Activated CD4-positive, alpha-beta T cell treated with anti-CD3 and anti-CD28 coated beads for 36 hours (primary cell): ENCODE measurements at regions of chr3 and their contacts with region 1.

Region 1: DNA sequence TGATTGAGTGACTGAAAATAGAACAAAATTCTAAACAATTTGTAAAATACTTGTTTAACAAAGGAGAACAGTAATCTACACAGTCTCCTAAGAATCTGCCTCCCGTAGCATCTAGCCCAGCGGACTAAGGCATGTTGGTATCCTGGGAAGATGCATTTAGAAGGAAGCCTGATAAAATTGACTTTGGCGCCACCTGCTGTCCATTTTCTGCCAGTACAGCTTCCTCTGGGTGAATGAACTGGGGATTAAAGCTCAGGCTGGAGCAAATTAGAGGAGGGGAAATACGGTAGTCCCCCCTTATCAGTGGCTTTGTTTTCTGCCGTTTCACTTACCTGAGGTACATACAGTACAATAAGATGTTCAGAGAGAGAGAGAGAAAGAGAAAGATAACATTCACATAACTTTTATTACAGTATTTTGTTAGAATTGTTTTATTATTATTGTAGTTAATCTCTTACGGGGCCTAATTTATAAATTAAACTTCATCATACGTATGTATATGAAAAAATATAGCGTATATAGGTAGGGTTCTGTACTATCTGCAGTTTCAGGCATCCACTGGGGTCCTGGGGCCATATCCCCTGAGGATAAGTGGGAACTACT is 191.6 kb downstream of the GAP43 start:
- DNase-seq: peak; percentile 79
- ATAC-seq: peak; percentile 57
- H3K4me3 Mint-ChIP-seq: no peak overlapping the region
- H3K27ac Mint-ChIP-seq: no peak overlapping the region
- H3K4me1 Mint-ChIP-seq: no peaks in the 10 kb centered on the region
- H3K27me3 Mint-ChIP-seq: peaks cover 7% of the 10 kb centered on the region

Region 2: DNA sequence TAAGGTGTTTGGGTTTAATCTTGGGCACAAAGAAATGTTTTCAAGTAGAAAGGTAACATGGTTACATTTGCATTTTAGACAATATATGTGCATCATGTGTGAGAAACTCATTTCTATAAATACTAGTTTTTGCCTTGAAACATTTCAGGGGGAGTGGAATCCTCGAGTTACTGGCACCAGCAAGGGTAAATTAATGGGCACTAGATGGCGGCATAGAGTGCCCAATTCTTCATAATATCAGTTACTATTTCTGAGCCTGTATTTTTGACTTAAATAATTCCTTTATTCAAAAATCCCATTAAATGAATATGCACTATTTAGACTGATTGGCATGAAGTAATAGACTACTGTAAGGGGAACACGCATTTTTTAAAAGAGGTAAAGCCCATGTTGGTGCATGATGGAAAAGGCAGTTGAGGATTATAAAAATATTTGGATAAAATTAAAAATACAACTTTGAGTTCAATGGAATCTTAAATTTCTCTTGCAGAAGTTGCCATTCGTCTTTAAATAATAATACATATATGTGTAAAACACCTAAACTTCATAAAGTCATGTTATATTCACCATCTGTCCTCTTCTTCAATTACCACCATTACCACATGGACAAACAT is 774.1 kb before region 1 on chr3:
- CTCF ChIA-PET with region 1: no interaction called
- POLR2A ChIA-PET with region 1: no interaction called
- intact Hi-C with region 1: loop called (anchors 1 to 2 kb)
- DNase-seq: peak; percentile 50
- ATAC-seq: peak; percentile 61
- H3K4me3 Mint-ChIP-seq: no peak overlapping the region
- H3K27ac Mint-ChIP-seq: no peak overlapping the region
- H3K4me1 Mint-ChIP-seq: peaks cover 11% of the 10 kb centered on the region
- H3K27me3 Mint-ChIP-seq: no peaks in the 10 kb centered on the region

Region 3: GRCh38 chr3:115217678-115218451 is 597.0 kb before region 1 on chr3:
- CTCF ChIA-PET with region 1: interaction called, 3 read pairs
- POLR2A ChIA-PET with region 1: no interaction called
- intact Hi-C with region 1: loop called (anchors 1 kb)
- DNase-seq: peak; percentile 32
- ATAC-seq: no peak
- H3K4me3 Mint-ChIP-seq: no peak overlapping the region
- H3K27ac Mint-ChIP-seq: no peak overlapping the region
- H3K4me1 Mint-ChIP-seq: no peaks in the 10 kb centered on the region
- H3K27me3 Mint-ChIP-seq: peaks cover 1% of the 10 kb centered on the region

Region 4: DNA sequence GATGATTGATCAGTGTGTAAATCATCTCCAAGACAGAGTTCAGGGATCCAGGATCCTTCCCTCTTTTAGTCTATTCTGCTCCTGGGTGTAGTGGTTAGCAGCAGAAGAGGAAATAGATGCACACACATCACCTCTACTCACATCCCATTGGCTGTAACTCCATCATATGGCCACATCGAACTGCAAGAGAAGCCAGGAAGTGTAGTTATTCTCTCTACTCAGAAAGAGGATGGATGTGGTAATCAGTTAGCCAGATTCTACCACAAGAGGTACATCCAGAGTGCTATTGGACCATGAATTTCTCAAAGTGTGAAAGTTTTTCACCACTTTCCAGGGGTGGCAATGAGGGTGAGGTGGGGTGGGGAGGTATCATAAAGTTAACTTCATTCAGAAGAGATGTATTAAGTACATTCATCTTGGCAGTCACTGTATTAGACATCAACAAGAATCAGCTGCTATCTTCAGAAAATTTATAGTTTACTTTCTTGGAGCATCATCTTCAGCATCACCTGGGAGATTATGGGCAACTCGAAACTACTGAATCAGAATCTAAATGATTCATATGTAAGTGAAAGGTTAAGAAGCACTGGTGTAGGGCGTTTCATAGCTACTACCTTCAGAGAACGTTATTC is 252.1 kb before region 1 on chr3:
- CTCF ChIA-PET with region 1: no interaction called
- POLR2A ChIA-PET with region 1: no interaction called
- intact Hi-C with region 1: no loop called
- DNase-seq: no peak
- ATAC-seq: peak; percentile 72
- H3K4me3 Mint-ChIP-seq: no peak overlapping the region
- H3K27ac Mint-ChIP-seq: no peak overlapping the region
- H3K4me1 Mint-ChIP-seq: no peaks in the 10 kb centered on the region
- H3K27me3 Mint-ChIP-seq: peaks cover 22% of the 10 kb centered on the region

Region 5: GRCh38 chr3:115885621-115886020 is 70.7 kb after region 1 on chr3:
- CTCF ChIA-PET with region 1: no interaction called
- POLR2A ChIA-PET with region 1: no interaction called
- intact Hi-C with region 1: no loop called
- DNase-seq: no peak
- ATAC-seq: no peak
- H3K4me3 Mint-ChIP-seq: no peak overlapping the region
- H3K27ac Mint-ChIP-seq: no peak overlapping the region
- H3K4me1 Mint-ChIP-seq: no peaks in the 10 kb centered on the region
- H3K27me3 Mint-ChIP-seq: peaks cover 7% of the 10 kb centered on the region

Region 6: GRCh38 chr3:116785226-116785625 is 970.3 kb after region 1 on chr3:
- CTCF ChIA-PET with region 1: no interaction called
- POLR2A ChIA-PET with region 1: no interaction called
- intact Hi-C with region 1: no loop called
- DNase-seq: no peak
- ATAC-seq: no peak
- H3K4me3 Mint-ChIP-seq: no peak overlapping the region
- H3K27ac Mint-ChIP-seq: no peak overlapping the region
- H3K4me1 Mint-ChIP-seq: no peaks in the 10 kb centered on the region
- H3K27me3 Mint-ChIP-seq: no peaks in the 10 kb centered on the region